Thyroid gland (tissue), 4 donors: ENCODE measurements at regions of chr19 and their contacts with region 1.

Region 1: DNA sequence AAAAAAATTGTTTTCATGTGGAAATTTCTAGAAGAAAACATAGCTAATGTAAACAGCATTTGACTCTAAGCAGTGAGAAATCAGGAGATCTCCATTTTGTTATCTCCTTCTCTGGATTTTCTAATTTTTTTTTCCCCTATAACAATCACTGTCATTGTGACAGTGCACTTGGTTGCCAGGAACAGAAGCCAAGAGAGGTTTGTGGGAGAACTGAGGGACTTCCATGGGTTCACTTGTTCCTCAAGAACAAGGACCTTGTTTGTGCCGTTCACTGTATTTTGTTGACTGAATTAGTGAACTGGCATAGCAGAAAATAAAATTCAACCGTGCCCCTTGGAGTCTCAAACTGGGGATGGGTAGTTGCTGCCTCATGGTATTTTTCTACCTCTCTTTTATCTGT is 17.1 kb downstream of the SHISA7 start:
- DNase-seq: no peak
- H3K4me3 ChIP-seq: no peak overlapping the region
- H3K27ac ChIP-seq: no peak overlapping the region
- H3K4me1 ChIP-seq: no peaks in the 10 kb centered on the region
- H3K27me3 ChIP-seq: no peaks in the 10 kb centered on the region
- CTCF ChIP-seq: no peak
- POLR2A ChIP-seq: no peak

Region 2: GRCh38 chr19:55301459-55302317 is 124.4 kb before region 1 on chr19:
- intact Hi-C with region 1: loop called (anchors 10 kb)
- DNase-seq: peak; percentile 79 to 82
- H3K4me3 ChIP-seq: peak overlapping the region in 1 of 3 donors; percentile 10
- H3K27ac ChIP-seq: no peak overlapping the region
- H3K4me1 ChIP-seq: peaks cover 5 to 6% of the 10 kb centered on the region in 2 donors
- H3K27me3 ChIP-seq: no peaks in the 10 kb centered on the region
- CTCF ChIP-seq: peak; percentile 75 to 96 (median 92)
- POLR2A ChIP-seq: no peak